AG04449 (cell line): ENCODE measurements at regions of chr6 and their contacts with region 1.

Region 1: DNA sequence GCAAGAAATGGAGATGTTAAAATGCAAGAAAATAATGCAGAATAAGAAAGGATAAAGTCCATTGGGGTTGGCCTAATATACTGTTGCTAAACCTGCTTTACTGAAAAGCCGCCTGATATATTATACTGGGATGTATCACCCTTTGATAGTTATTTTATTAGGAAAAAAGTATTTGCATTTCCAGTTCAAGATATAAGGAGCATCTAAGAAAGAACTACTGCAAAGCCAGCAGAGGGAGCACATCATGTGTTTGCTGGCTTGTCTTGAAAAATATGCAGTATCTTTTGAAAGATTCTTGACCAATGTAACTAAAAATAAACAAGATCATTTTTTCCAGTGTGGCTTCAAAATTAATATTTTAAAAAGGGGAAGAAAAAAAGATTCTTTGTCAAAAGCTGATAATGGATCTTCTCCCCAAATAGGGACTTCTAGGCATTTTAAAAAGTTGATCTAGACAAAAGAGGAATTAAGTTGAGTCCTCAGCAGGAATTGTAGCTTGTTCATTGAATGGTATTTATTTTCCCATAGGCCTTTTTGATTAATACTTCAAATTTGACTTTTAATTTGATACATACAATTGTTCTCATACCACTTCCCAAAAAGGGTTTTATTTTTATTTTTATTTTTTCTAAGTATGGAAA is 214.9 kb downstream of the ZFAND3 start:
- DNase-seq: no peak
- H3K4me3 ChIP-seq: no peak overlapping the region
- CTCF ChIP-seq: peak; percentile 61

Region 2: DNA sequence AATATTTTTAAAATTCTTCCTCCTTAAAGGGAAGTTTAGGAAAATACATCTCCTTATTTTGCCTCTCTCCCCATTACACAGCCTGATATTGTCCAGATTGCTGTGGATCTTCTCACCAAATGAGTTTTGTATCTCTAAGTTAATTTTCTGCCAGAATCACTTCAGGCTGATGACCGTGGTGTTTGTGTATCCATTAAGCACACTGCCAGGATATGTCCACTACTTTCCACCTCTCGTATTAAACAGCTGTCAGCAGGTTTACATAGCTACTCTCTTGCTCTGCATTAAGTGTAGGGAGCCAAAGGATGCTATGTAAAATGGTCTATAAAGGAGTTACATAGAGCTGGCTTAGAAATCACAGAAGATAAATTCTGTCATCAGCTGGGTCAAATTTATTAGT is 13.8 kb before region 1 on chr6:
- CTCF ChIA-PET with region 1: interaction called, 17 read pairs
- POLR2A ChIA-PET with region 1: no interaction called
- DNase-seq: no peak
- H3K4me3 ChIP-seq: no peak overlapping the region
- CTCF ChIP-seq: no peak

Region 3: GRCh38 chr6:38045701-38046305 is 11.4 kb after region 1 on chr6:
- CTCF ChIA-PET with region 1: interaction called, 34 read pairs
- POLR2A ChIA-PET with region 1: no interaction called
- DNase-seq: no peak
- H3K4me3 ChIP-seq: no peak overlapping the region
- CTCF ChIP-seq: no peak

Region 4: GRCh38 chr6:38187325-38187724 is 152.9 kb after region 1 on chr6:
- CTCF ChIA-PET with region 1: no interaction called
- POLR2A ChIA-PET with region 1: no interaction called
- DNase-seq: no peak
- H3K4me3 ChIP-seq: no peak overlapping the region
- CTCF ChIP-seq: no peak